ENCODE measurements at regions of chr15 and their contacts with region 1.

Region 1: DNA sequence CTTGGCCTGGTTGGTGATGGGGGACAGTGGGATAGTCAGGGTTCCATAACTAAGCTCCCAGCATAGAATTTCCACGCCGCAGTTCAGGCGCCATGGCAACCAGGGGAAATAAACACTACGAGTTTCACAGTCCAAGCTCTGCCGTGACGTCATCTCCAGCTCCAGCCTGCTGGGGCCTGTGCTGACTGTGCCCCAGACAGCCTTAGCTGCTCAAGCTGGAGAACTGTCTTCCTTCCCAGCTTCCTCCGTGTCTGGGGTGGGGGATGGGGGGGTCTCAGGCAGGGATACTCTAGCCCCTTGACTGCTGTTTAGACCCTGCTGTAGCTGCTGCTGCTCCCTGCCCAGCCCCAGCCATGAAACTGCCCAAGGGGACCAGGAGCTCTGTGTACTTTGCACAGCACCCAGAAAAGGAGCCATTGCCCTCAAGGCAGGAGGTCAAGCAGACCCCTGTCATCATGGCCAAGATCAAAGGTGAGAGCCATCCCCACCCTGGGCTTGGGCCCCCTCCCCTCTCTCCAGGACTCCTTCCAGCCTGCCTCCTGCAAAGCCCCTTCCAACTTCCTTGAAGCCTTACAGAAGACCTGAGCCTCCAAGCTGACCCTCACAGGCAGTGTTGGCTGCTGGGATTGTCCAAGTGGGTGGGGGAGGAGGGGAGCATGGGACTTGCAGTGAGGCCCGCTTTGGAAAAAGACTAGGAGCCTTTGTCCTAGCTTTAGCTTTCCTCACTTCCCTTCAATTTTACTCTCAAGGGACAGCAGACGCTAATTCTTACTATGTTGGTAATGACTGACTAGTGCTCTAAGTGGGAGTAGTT is 11.4 kb upstream of the CSPG4 start:
- DNase-seq: peak in 1 of 2 experiments; percentile 76
- H3K4me3 ChIP-seq: no peak overlapping the region
- H3K27ac ChIP-seq: no peak overlapping the region
- H3K4me1 ChIP-seq: peaks cover 18% of the 10 kb centered on the region
- H3K27me3 ChIP-seq: no peaks in the 10 kb centered on the region
- CTCF ChIP-seq: no peak

Region 2: GRCh38 chr15:74857082-74857655 is 866.9 kb before region 1 on chr15:
- CTCF ChIA-PET with region 1: no interaction called
- POLR2A ChIA-PET with region 1: interaction called, 11 read pairs
- intact Hi-C with region 1: no loop called
- DNase-seq: peak; percentile 69 to 70
- H3K4me3 ChIP-seq: no peak overlapping the region
- H3K27ac ChIP-seq: peak overlapping the region; percentile 49
- H3K4me1 ChIP-seq: peaks cover 21% of the 10 kb centered on the region
- H3K27me3 ChIP-seq: no peaks in the 10 kb centered on the region
- CTCF ChIP-seq: no peak

Region 3: DNA sequence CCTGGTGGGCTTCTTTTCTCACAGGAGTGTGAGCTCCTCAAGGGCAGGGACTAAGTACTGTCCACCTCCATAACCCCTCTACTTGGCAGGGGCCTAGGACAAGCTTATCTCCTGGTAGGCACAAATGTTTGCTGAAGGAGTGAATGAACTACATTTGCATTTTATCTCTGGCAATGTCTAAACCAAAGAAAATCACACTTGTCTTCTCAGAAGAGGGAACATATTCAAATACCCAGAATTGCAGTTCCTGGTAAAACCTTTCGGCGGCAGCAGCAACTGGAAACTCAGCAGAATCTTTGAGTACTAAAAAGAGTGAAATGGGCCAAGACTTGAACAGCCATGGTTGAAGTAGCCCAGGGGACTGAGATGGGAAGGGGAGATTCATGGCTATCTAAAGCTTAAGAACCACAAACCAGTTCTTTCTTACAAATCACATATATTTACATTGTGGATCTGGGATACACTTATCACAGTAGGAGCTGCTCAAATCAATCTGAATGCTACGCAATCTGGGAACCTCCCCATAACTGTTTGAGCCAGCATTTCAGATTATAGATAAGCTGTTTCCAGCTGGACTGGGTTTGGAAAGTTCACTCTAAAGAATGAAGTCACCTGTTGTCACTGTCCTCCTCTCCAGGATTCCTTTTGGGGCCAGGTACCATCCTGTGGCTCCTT is 126.2 kb before region 1 on chr15:
- CTCF ChIA-PET with region 1: no interaction called
- POLR2A ChIA-PET with region 1: no interaction called
- intact Hi-C with region 1: no loop called
- DNase-seq: no peak
- H3K4me3 ChIP-seq: no peak overlapping the region
- H3K27ac ChIP-seq: no peak overlapping the region
- H3K4me1 ChIP-seq: no peaks in the 10 kb centered on the region
- H3K27me3 ChIP-seq: no peaks in the 10 kb centered on the region
- CTCF ChIP-seq: peak; percentile 53; the same call in 1 of the 2 replicates

Region 4: GRCh38 chr15:75647370-75648155 is 76.5 kb before region 1 on chr15 and contains the start of gene SNX33:
- CTCF ChIA-PET with region 1: interaction called, 17 read pairs
- POLR2A ChIA-PET with region 1: no interaction called
- intact Hi-C with region 1: no loop called
- DNase-seq: peak; percentile 58 to 82
- H3K4me3 ChIP-seq: peak within 1 kb of the TSS; percentile 86
- H3K27ac ChIP-seq: peak within 1 kb of the TSS; percentile 46
- H3K4me1 ChIP-seq: peaks cover 58% of the 10 kb centered on the region
- H3K27me3 ChIP-seq: no peaks in the 10 kb centered on the region
- CTCF ChIP-seq: peak; percentile 60
- total RNA-seq, gene SNX33: 27.8 and 27.9 TPM in 2 replicates

Region 5: DNA sequence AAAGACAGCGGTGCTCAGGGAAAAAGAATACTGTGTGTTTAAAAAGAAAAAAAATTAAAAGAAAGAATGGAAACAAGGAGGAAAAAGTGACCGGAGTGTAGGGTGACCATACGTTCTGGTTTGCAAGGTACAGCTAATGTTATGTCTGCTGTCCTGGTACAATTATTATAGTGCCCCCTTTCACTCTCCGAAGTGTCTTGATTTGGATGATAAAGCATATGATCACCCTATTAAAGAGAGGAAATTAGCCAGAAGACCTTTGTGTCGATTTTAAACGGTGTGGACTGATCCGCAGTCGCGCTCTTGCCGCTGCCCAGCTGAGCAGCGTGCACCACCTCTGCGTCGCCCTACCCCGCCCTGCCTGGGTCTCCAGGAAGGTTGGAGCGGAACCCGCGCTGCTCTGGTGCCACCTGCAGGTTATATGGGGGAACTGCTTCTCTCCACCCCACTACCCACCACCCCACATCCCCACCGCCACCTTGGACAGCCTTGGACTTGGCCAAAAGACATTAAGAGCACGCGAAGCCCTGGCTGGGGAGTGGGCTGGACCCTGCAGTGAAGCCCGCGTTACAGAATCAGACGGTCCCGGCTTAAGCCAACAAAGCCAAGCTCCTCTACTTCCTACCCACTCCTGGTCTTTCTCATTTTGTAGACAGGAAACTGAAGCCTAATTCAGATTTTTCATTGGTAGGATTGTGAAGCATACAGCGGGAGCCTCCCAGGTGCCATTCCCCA is 78.0 kb after region 1 on chr15:
- CTCF ChIA-PET with region 1: interaction called, 5 read pairs
- POLR2A ChIA-PET with region 1: no interaction called
- intact Hi-C with region 1: loop called (anchors 5 kb)
- DNase-seq: peak in 1 of 2 experiments; percentile 78
- H3K4me3 ChIP-seq: peak overlapping the region; percentile 23; the same call in 1 of the 2 replicates
- H3K27ac ChIP-seq: no peak overlapping the region
- H3K4me1 ChIP-seq: peaks cover 5% of the 10 kb centered on the region; the same call in 1 of the 2 replicates
- H3K27me3 ChIP-seq: peaks cover 30% of the 10 kb centered on the region
- CTCF ChIP-seq: peak; percentile 82

Region 6: GRCh38 chr15:75891895-75892294 is 167.8 kb after region 1 on chr15:
- CTCF ChIA-PET with region 1: interaction called, 12 read pairs
- POLR2A ChIA-PET with region 1: no interaction called
- intact Hi-C with region 1: no loop called
- DNase-seq: no peak
- H3K4me3 ChIP-seq: no peak overlapping the region
- H3K27ac ChIP-seq: peak overlapping the region; percentile 52
- H3K4me1 ChIP-seq: peaks cover 19% of the 10 kb centered on the region
- H3K27me3 ChIP-seq: no peaks in the 10 kb centered on the region
- CTCF ChIP-seq: no peak

Region 7: GRCh38 chr15:75966073-75966472 is 242.0 kb after region 1 on chr15:
- CTCF ChIA-PET with region 1: no interaction called
- POLR2A ChIA-PET with region 1: interaction called, 25 read pairs
- intact Hi-C with region 1: no loop called
- DNase-seq: peak in 1 of 2 experiments; percentile 77
- H3K4me3 ChIP-seq: no peak overlapping the region
- H3K27ac ChIP-seq: peak overlapping the region; percentile 27; the same call in 1 of the 2 replicates
- H3K4me1 ChIP-seq: peaks cover 16% of the 10 kb centered on the region
- H3K27me3 ChIP-seq: no peaks in the 10 kb centered on the region
- CTCF ChIP-seq: no peak

Region 8: DNA sequence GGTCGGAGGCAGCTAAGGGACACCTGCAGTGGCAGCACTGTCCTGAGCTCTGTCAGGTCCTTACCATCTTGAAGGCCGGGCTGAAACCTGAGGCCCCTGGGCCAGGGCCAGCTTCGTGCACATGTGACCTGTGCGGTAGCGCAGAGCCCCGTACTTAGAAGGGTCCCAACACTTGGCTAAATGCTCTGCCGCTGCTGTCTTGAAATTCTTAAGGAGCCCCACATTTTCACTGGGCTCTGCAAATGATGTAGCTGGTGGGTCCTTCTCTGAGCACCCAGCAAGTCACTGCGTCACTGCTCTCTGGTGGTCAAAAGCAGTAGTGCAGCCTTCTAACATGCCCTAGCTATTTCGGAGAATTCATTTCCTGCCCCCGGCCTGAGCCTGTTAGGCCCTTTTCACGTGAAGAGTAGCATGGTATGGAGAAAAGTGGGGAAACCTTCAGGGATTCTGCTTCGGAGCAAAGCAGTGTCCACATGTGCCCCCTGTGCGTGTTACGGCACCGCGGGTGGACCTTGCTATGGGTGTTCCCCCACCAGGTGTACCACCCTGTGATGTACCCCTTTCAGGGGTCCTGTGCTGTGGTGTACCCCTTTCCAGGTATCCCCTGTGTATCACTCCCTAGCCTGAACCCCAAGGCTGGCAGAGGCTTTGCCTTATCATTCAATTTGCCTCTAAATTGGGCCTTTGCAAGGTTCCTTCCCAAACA is 415.5 kb after region 1 on chr15:
- CTCF ChIA-PET with region 1: interaction called, 4 read pairs
- POLR2A ChIA-PET with region 1: no interaction called
- intact Hi-C with region 1: loop called (anchors 2 kb)
- DNase-seq: peak; percentile 47 to 69
- H3K4me3 ChIP-seq: no peak overlapping the region
- H3K27ac ChIP-seq: no peak overlapping the region
- H3K4me1 ChIP-seq: no peaks in the 10 kb centered on the region
- H3K27me3 ChIP-seq: peaks cover 13% of the 10 kb centered on the region; the same call in 1 of the 2 replicates
- CTCF ChIP-seq: peak; percentile 95

Region 9: DNA sequence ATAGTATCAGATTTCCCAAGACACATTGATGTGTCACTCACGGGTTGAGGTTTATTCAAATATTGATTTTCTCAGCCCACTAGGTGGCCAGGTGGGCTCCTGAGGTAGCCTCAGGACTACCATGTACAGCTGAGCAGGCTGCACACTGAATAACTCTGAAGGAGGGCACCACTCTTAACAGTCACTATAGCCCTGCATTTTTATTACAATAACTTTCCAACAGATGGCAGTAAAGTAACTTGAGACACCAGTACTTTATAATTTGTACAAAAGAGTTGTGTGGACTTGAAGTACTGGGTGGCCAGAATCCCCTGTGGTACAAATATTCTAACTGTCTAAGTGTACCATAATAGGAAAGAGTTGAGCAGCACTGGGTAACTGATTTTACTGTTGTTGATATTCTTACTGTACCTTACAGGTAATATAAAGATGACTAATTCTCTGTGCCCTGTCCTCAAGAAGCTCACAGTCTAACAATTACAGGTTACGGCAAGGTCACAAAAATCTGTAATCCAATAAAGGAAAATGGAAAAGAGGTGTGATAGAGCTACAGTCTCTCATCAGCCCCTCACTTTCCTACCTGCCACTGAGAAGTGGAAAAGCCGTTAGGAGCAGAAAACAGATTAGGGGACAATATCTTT is 511.3 kb after region 1 on chr15:
- CTCF ChIA-PET with region 1: no interaction called
- POLR2A ChIA-PET with region 1: no interaction called
- intact Hi-C with region 1: no loop called
- DNase-seq: no peak
- H3K4me3 ChIP-seq: no peak overlapping the region
- H3K27ac ChIP-seq: no peak overlapping the region
- H3K4me1 ChIP-seq: no peaks in the 10 kb centered on the region
- H3K27me3 ChIP-seq: no peaks in the 10 kb centered on the region
- CTCF ChIP-seq: peak; percentile 68

Measured in PC-9 (cell line).